Activated CD8-positive, alpha-beta T cell treated with anti-CD3 and anti-CD28 coated beads, Interleukin-2, amount 10 ng/mL, durations not matched to agents 7 days and 5 days (primary cell): ENCODE measurements at regions of chr10 and their contacts with region 1.

Region 1: DNA sequence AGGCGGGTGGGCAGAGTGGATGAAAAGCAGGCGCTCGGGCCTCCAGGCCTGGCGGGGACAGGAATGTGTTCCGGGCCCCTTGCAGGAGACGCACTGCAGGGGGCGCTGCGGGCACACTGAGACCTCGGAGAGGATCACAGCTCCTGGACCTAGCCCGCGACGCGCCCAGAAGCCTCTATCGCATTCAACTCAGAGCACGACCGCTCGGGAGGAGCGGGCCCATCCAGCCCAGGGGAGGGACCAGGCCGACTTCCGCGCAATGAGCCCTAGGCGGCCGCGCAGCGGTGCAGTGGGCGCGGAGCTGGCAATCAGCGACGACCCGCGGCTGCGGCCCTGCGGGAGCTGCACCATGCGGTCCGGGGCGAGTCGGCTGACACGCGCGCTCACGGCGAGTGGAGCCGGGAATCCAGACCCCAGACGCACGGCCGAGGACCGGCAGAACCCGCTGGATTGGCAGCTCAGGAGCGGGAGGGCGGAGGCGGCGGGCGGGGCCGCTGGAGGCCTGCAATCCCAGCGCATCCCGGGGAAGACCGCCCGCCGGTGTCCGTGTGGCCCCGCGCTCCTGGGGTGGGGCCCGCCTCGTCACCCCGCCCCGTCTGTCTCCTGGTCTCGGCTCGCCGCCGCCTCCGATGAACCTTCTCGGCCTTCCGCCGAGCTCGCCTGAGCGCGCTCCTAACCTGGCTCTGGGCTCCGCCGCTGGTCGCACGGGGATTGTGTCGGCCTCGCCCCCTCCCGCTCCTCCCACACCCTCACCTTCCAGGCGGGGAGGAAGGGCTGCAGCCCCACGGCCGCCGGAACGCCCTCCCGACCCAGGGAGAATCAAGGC is 33.5 kb upstream of the GRID1 start:
- DNase-seq: peak; percentile 97
- ATAC-seq: peak; percentile 93
- H3K4me3 Mint-ChIP-seq: peak overlapping the region; percentile 89
- H3K27ac Mint-ChIP-seq: peak overlapping the region; percentile 92
- H3K4me1 Mint-ChIP-seq: peaks cover 29% of the 10 kb centered on the region
- H3K27me3 Mint-ChIP-seq: peaks cover 6% of the 10 kb centered on the region

Region 2: DNA sequence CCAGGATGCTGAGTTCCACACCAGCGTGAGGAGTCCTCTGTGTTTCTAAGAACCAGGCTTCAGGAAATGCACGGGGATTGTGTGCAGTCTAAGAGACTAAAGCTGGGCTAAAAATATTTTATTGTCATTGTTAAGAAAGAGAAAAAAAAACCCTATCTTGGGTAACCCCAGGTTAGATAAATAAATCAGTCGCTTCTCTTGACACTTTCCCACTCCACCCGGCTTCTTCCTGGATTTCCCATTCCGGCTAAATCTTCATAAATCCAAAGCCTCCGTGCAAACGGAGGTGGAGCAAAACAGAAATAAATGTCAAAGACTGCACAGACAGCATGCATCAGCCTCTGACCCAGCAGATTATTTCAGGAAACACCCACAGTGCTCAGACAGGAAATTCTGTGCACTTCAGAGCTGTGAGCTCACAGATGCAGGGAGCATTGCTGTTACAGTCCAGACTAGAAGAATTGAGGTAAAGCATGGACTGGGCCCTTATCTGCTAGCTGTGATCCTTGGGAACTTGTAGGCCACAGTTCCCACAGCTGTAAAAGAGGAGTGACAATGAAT is 11.3 kb after region 1 on chr10:
- CTCF ChIA-PET with region 1: interaction called, 93 read pairs
- POLR2A ChIA-PET with region 1: interaction called, 136 read pairs
- DNase-seq: peak; percentile 62
- ATAC-seq: peak; percentile 76
- H3K4me3 Mint-ChIP-seq: peak overlapping the region; percentile 72
- H3K27ac Mint-ChIP-seq: peak overlapping the region; percentile 82
- H3K4me1 Mint-ChIP-seq: peaks cover 51% of the 10 kb centered on the region
- H3K27me3 Mint-ChIP-seq: no peaks in the 10 kb centered on the region

Region 3: GRCh38 chr10:86439544-86439943 is 39.5 kb after region 1 on chr10:
- CTCF ChIA-PET with region 1: interaction called, 16 read pairs
- POLR2A ChIA-PET with region 1: interaction called, 7 read pairs
- DNase-seq: no peak
- ATAC-seq: peak; percentile 44
- H3K4me3 Mint-ChIP-seq: no peak overlapping the region
- H3K27ac Mint-ChIP-seq: peak overlapping the region; percentile 79
- H3K4me1 Mint-ChIP-seq: peaks cover 27% of the 10 kb centered on the region
- H3K27me3 Mint-ChIP-seq: no peaks in the 10 kb centered on the region

Region 4: GRCh38 chr10:86461963-86462804 is 62.1 kb after region 1 on chr10:
- CTCF ChIA-PET with region 1: interaction called, 13 read pairs
- POLR2A ChIA-PET with region 1: interaction called, 4 read pairs
- DNase-seq: no peak
- ATAC-seq: no peak
- H3K4me3 Mint-ChIP-seq: no peak overlapping the region
- H3K27ac Mint-ChIP-seq: no peak overlapping the region
- H3K4me1 Mint-ChIP-seq: no peaks in the 10 kb centered on the region
- H3K27me3 Mint-ChIP-seq: no peaks in the 10 kb centered on the region

Region 5: DNA sequence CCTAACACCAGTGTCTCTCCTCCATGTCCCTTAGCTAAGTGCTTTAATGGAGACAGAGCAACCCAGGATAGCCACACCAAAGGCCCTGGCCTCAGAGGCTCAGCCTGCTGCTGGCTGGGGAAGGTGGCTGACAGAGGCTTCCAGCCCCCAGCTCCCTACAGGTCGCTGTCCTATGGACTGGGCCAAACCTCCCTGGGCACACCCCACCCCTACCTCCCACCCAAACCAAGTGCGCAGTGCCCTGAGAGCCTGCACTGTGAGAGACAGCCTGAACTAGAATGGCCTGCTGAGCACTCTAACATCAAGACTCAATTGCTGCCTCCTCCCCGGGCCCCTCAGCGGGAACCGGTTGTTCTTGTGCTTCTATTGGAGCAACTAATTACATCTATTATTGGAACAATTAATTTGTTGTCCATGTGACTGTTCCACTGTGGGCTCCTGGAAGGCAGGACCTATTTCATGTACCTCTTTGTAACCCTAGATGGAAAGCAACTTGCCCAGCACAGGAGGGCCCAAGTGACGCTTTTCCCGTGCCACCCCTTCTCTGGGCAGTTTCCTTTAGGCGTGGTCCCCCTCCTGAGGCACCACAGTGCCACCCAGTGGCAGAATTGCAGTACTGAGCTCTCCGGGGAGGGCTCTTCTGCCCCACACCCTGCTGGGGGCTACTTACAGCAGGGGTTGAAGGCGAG is 185.1 kb after region 1 on chr10:
- CTCF ChIA-PET with region 1: interaction called, 65 read pairs
- POLR2A ChIA-PET with region 1: interaction called, 19 read pairs
- DNase-seq: peak; percentile 79
- ATAC-seq: peak; percentile 96
- H3K4me3 Mint-ChIP-seq: no peak overlapping the region
- H3K27ac Mint-ChIP-seq: no peak overlapping the region
- H3K4me1 Mint-ChIP-seq: no peaks in the 10 kb centered on the region
- H3K27me3 Mint-ChIP-seq: no peaks in the 10 kb centered on the region